ENCODE measurements at regions of chrX and their contacts with region 1.

Region 1: DNA sequence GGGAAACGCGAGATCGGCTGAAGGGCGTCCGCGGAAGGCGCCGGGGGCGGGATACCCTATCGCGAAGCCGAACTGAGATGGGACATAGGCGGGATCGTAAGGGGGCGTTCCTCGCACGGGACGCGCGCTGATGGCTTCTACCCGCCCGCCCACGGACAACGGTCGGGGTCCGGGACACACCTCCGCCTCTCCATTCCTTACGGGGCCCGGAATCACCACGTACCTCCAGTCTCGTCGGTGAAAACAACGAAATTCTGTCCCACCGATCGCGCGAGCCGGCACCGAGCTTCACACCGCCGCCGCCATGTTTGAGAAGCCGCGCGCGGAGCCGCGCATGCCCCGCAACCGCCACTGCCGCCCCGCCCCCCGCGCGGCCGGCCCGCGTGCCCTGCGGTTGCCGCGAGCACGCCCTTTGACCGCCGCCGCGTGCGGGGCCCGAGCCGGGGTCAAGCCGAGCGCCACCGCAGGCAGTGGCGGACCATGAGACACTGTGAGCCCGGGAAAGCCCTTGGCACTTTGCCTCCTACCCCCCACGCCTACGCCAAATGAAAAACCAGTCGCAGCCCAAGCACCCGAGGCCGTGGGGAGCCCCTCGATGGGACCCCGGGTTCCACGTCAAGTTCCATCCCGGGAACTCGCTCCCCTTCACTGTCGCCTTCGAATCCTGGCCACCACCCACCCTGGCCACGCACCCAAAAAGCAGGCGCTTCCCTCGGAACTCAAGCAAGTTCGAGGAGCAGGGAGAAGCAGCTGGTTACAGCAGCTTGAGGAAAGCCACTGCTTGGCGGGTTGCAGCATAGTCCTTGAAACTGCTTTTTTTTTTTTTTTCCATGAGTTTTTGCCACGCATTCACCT is at the start of gene SCML2:
- DNase-seq: peak; percentile 31
- ATAC-seq: peak; percentile 65
- H3K4me3 ChIP-seq: peak within 1 kb of the TSS; percentile 67
- H3K27ac ChIP-seq: no peak within 1 kb of the TSS
- H3K4me1 ChIP-seq: peaks cover 11% of the 10 kb centered on the region
- H3K27me3 ChIP-seq: no peaks in the 10 kb centered on the region
- CTCF ChIP-seq: no peak; the same call in 1 of the 2 replicates
- total RNA-seq, gene SCML2: 3.5 and 4.8 TPM in 2 replicates

Region 2: GRCh38 chrX:18252644-18253359 is 101.8 kb before region 1 on chrX:
- CTCF ChIA-PET with region 1: no interaction called
- POLR2A ChIA-PET with region 1: interaction called, 4 read pairs
- intact Hi-C with region 1: loop called (anchors 10 kb)
- DNase-seq: no peak
- ATAC-seq: no peak
- H3K4me3 ChIP-seq: no peak overlapping the region
- H3K27ac ChIP-seq: no peak overlapping the region
- H3K4me1 ChIP-seq: peaks cover 9% of the 10 kb centered on the region
- H3K27me3 ChIP-seq: no peaks in the 10 kb centered on the region
- CTCF ChIP-seq: no peak

Region 3: GRCh38 chrX:18272222-18272621 is 82.4 kb before region 1 on chrX:
- CTCF ChIA-PET with region 1: no interaction called
- POLR2A ChIA-PET with region 1: no interaction called
- intact Hi-C with region 1: no loop called
- DNase-seq: no peak
- ATAC-seq: no peak
- H3K4me3 ChIP-seq: no peak overlapping the region
- H3K27ac ChIP-seq: no peak overlapping the region
- H3K4me1 ChIP-seq: no peaks in the 10 kb centered on the region
- H3K27me3 ChIP-seq: no peaks in the 10 kb centered on the region
- CTCF ChIP-seq: no peak

Measured in PC-3 (cell line).